ENCODE measurements at regions of chr19 and their contacts with region 1.

Region 1: GRCh38 chr19:11924886-11925650 is at the start of gene ZNF700:
- DNase-seq: peak; percentile 92 to 95 (median 95)
- H3K4me3 ChIP-seq: peak within 1 kb of the TSS; percentile 84 to 98 (median 91)
- H3K27ac ChIP-seq: peak within 1 kb of the TSS; percentile 83 to 92
- H3K4me1 ChIP-seq: peaks cover 7 to 33% (median 32%) of the 10 kb centered on the region in 4 experiments
- H3K27me3 ChIP-seq: no peaks in the 10 kb centered on the region

Region 2: DNA sequence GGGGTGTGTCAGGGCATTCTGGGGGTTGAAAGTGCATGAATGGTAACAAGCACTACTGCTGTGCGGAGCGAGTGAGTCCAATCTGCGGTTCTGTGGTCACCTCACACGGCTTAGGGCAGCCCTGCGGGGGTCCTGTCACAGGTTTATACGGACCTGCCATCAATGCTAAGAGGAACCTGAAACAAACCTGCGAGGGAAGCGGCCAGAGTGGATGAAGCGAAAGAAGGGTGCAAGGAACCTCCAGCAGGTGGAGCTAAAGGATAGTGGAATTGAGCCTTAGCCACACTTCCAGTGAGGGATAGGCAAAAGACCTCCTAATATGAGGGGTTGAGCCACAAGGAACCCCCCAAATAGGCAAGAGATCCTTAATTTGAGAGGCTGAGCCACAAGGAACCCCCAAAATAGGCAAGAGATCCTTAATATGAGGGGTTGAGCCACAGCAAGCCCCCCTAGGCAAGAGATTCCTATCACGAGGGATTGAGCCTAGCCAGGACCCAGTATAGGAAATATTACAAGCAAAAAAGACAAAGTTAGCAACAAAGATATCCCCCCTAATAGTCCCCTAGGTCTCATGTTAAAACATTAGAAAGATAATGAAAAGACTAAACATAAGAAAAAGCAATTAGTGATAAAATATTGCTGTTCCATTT is 43.8 kb before region 1 on chr19:
- CTCF ChIA-PET with region 1: interaction called, 24 read pairs
- POLR2A ChIA-PET with region 1: no interaction called
- DNase-seq: peak; percentile 76 to 88 (median 83)
- H3K4me3 ChIP-seq: peak overlapping the region in 1 of 7 experiments; percentile 38
- H3K27ac ChIP-seq: no peak overlapping the region
- H3K4me1 ChIP-seq: peaks cover 0 to 21% (median 9%) of the 10 kb centered on the region in 4 experiments
- H3K27me3 ChIP-seq: no peaks in the 10 kb centered on the region

Region 3: GRCh38 chr19:11902228-11902627 is 22.8 kb before region 1 on chr19:
- CTCF ChIA-PET with region 1: no interaction called
- POLR2A ChIA-PET with region 1: no interaction called
- DNase-seq: no peak
- H3K4me3 ChIP-seq: peak overlapping the region in 1 of 7 experiments; percentile 0
- H3K27ac ChIP-seq: no peak overlapping the region
- H3K4me1 ChIP-seq: no peaks in the 10 kb centered on the region
- H3K27me3 ChIP-seq: no peaks in the 10 kb centered on the region

Region 4: DNA sequence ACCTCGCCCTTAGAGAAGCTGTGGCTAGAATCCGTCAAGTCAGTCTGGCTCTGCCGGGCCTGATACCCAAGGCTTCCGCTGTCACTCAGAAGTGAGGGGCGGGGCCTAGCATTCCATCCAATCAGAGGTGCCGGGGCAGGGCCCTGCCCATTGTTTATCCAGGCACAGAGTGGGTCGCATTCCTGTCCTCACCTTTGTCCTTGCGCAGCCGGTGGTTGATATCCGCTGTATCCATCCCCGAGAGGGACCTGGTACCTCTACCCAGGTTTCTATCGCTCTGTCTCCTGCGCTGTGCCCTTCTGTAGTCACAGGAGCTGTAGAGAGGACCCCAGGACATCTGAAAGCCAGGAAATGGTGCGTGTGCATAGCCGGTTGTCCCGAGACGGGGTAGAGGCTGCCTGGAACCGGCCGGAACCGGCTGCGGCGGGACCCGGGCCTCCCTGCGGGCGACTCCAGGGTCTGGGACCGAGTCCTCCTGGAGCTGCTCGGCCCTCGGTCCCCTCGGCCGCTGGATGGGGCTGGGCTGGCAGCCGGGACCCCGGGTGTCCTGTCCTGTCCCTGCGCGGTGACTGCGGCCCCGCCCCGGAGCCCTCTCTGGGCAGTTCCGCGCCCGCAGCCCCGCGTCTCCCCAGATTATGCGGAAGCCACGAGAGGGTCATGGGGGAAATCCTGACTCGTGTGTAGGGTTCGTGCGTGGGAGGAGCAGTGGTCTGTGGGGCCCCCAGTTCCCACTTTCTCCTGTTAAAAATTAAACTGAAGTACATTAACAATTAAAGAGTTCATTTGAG is 40.0 kb after region 1 on chr19 and contains the start of gene ZNF763:
- CTCF ChIA-PET with region 1: interaction called, 34 read pairs
- POLR2A ChIA-PET with region 1: interaction called, 4 read pairs
- DNase-seq: peak; percentile 91 to 96 (median 96)
- H3K4me3 ChIP-seq: peak within 1 kb of the TSS; percentile 73 to 100 (median 94)
- H3K27ac ChIP-seq: peak within 1 kb of the TSS; percentile 83 to 91
- H3K4me1 ChIP-seq: peaks cover 0 to 22% (median 18%) of the 10 kb centered on the region in 4 experiments
- H3K27me3 ChIP-seq: no peaks in the 10 kb centered on the region

Measured in common myeloid progenitor, CD34-positive (primary cell).